Activated CD4-positive, alpha-beta memory T cell treated with anti-CD3 and anti-CD28 coated beads for 36 hours (primary cell): ENCODE measurements at regions of chr5 and their contacts with region 1.

Region 1: GRCh38 chr5:177311723-177312648 is at the start of gene MXD3:
- DNase-seq: peak; percentile 98
- H3K4me3 Mint-ChIP-seq: peak within 1 kb of the TSS; percentile 78
- H3K27ac Mint-ChIP-seq: peak within 1 kb of the TSS; percentile 88
- H3K4me1 Mint-ChIP-seq: peaks cover 22% of the 10 kb centered on the region
- H3K27me3 Mint-ChIP-seq: peaks cover 1% of the 10 kb centered on the region
- total RNA-seq, gene MXD3: 31.2 to 33.4 TPM

Region 2: GRCh38 chr5:177113566-177114424 is 198.2 kb before region 1 on chr5:
- CTCF ChIA-PET with region 1: interaction called, 21 read pairs
- POLR2A ChIA-PET with region 1: no interaction called
- intact Hi-C with region 1: loop called (anchors 1 kb)
- DNase-seq: peak; percentile 89
- H3K4me3 Mint-ChIP-seq: no peak overlapping the region
- H3K27ac Mint-ChIP-seq: no peak overlapping the region
- H3K4me1 Mint-ChIP-seq: peaks cover 21% of the 10 kb centered on the region
- H3K27me3 Mint-ChIP-seq: no peaks in the 10 kb centered on the region

Region 3: DNA sequence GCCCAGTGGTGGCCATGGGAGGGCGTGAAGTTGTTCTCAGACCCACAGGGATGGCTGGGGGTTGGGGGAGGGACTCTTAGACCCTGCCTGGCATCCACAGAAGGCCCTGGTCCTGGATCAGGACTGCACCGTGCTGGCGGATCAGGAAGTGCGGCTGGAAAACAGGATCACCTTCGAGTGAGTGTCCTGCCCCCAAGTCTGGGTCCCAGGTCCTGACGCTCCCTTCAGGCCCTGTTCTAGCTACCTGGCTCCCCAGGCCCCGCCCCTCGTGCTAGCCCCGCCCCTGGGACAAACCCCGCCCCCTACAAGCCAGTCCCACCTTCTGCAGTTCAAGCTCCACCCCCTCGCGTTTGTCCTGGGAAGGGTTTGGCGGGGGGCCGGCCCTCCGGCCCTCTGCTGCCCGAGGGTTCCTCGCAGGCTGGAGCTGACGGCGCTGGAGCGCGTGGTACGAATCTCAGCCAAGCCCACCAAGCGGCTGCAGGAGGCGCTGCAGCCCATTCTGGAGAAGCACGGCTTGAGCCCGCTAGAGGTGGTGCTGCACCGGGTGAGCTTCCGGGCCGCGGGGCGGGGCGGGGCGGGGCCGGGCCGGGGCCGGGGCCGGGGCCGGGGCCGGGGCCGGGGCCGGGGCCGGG is 58.6 kb after region 1 on chr5:
- CTCF ChIA-PET with region 1: interaction called, 28 read pairs
- POLR2A ChIA-PET with region 1: no interaction called
- intact Hi-C with region 1: no loop called
- DNase-seq: peak; percentile 79
- H3K4me3 Mint-ChIP-seq: peak overlapping the region; percentile 74
- H3K27ac Mint-ChIP-seq: peak overlapping the region; percentile 38
- H3K4me1 Mint-ChIP-seq: peaks cover 65% of the 10 kb centered on the region
- H3K27me3 Mint-ChIP-seq: no peaks in the 10 kb centered on the region

Region 4: GRCh38 chr5:177431317-177432142 is 119.5 kb after region 1 on chr5:
- CTCF ChIA-PET with region 1: interaction called, 11 read pairs
- POLR2A ChIA-PET with region 1: interaction called, 3 read pairs
- intact Hi-C with region 1: loop called (anchors 1 kb)
- DNase-seq: peak; percentile 84
- H3K4me3 Mint-ChIP-seq: peak overlapping the region; percentile 97
- H3K27ac Mint-ChIP-seq: peak overlapping the region; percentile 97
- H3K4me1 Mint-ChIP-seq: peaks cover 61% of the 10 kb centered on the region
- H3K27me3 Mint-ChIP-seq: no peaks in the 10 kb centered on the region

Region 5: GRCh38 chr5:177516604-177517568 is 204.9 kb after region 1 on chr5 and contains the start of gene DDX41:
- CTCF ChIA-PET with region 1: interaction called, 4 read pairs
- POLR2A ChIA-PET with region 1: no interaction called
- intact Hi-C with region 1: loop called (anchors 5 kb)
- DNase-seq: peak; percentile 98
- H3K4me3 Mint-ChIP-seq: peak within 1 kb of the TSS; percentile 88
- H3K27ac Mint-ChIP-seq: peak within 1 kb of the TSS; percentile 83
- H3K4me1 Mint-ChIP-seq: peaks cover 46% of the 10 kb centered on the region
- H3K27me3 Mint-ChIP-seq: no peaks in the 10 kb centered on the region
- total RNA-seq, gene DDX41: 143 to 145 TPM